ENCODE measurements at regions of chr22 and their contacts with region 1.

Region 1: DNA sequence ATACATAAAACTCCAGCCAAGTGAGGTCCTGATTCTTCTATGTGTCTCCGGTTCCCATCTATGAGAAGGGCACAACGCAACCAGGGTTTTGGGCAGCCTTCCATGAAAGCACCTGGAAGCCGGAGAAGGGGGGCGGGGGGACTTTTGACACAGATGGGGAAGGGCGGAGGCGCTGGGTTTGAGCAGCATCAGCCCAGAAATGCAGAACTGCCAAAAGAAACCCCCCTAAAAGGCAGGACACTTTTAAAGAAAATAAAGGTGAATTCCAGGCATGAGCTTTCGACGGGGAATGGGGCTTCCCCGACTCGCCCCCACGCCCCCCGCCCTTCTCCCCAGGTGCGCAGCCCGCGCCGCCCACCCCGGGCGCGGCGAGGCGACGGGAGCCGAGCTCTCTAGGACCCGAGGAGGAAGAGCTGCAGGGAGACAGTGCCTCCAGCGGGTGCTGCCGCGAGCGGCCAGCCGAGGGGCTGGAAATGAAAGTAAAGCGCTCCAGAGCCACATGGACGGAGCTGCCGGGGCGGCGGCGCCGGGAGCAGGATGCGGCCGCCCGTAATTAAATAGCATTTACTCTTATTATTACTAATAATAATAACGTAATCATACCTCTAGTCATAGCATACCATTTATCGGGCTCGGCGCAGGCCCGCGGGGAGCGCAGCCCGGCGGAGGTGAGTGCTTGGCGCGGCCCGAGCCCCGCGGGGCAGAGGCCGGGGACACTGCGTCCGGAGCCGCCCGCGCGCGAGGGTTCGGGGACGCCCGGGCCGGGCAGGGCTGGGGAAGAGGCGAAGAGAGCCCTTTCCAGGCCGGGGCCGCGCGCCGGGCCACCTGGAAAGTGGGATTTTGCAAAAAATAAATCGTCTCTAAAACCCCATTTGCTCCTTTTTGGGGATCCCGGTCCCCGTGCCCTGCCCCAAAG is at the start of gene ZC3H7B:
- DNase-seq: peak; percentile 83
- ATAC-seq: peak; percentile 89
- H3K4me3 Mint-ChIP-seq: peak within 1 kb of the TSS; percentile 74
- H3K27ac Mint-ChIP-seq: peak within 1 kb of the TSS; percentile 6; the same call in 1 of the 2 replicates
- H3K4me1 Mint-ChIP-seq: peaks cover 18% of the 10 kb centered on the region
- H3K27me3 Mint-ChIP-seq: no peaks in the 10 kb centered on the region
- CTCF ChIP-seq: no peak
- total RNA-seq, gene ZC3H7B: 61.6 to 64.7 TPM (median 64.7 TPM) in 3 replicates

Region 2: GRCh38 chr22:41157083-41157482 is 144.3 kb before region 1 on chr22:
- CTCF ChIA-PET with region 1: no interaction called
- POLR2A ChIA-PET with region 1: no interaction called
- DNase-seq: no peak
- ATAC-seq: no peak
- H3K4me3 Mint-ChIP-seq: no peak overlapping the region
- H3K27ac Mint-ChIP-seq: no peak overlapping the region
- H3K4me1 Mint-ChIP-seq: no peaks in the 10 kb centered on the region
- H3K27me3 Mint-ChIP-seq: no peaks in the 10 kb centered on the region
- CTCF ChIP-seq: no peak

Region 3: DNA sequence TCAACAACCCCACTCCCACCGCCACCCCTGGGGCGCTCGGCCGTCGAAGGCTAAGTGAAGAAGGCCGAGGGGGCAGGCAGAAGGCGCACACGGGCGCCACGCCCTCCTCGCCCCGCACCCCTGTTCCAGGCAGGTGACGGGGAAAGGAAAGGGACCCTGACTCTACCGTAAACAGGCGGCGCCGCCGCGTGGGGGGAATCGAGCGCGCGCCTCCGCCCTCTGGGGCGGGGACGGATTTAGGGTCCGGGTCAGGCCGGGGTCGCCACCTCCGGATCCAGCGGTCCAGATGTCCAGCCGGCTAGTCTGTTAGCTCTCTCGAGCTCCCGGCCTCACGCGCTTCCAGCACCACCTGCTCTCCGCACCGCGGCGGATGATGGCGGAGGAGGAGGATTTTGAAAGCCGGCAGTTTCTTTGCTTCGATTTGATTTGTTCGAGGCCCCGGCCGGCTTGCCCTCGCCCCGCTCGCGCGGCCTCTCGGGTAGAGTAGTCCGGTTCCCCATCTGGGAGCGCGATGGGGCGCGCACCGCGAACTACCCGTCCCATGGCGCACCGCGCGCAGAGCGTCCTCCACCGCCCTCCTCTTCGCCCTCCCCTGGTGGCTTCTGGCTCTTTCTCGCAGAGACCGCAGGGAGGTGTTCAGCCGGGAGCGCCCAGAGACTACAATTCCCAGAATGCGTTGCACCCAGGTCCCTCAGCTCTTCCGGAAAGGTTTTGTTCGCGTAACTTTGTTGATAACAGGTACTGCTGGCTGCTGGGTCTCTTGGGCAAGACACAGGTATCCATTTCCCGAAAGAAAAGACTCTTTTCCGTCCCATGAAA is 15.3 kb before region 1 on chr22 and contains the start of gene RANGAP1:
- CTCF ChIA-PET with region 1: interaction called, 6 read pairs
- POLR2A ChIA-PET with region 1: interaction called, 10 read pairs
- DNase-seq: peak; percentile 99
- ATAC-seq: peak; percentile 98
- H3K4me3 Mint-ChIP-seq: peak within 1 kb of the TSS; percentile 88
- H3K27ac Mint-ChIP-seq: peak within 1 kb of the TSS; percentile 99
- H3K4me1 Mint-ChIP-seq: peaks cover 47% of the 10 kb centered on the region
- H3K27me3 Mint-ChIP-seq: no peaks in the 10 kb centered on the region
- CTCF ChIP-seq: no peak
- total RNA-seq, gene RANGAP1: 144 to 160 TPM (median 151 TPM) in 3 replicates

Measured in WTC11 (cell line).